ENCODE measurements at regions of chr4 and their contacts with region 1.

Region 1: DNA sequence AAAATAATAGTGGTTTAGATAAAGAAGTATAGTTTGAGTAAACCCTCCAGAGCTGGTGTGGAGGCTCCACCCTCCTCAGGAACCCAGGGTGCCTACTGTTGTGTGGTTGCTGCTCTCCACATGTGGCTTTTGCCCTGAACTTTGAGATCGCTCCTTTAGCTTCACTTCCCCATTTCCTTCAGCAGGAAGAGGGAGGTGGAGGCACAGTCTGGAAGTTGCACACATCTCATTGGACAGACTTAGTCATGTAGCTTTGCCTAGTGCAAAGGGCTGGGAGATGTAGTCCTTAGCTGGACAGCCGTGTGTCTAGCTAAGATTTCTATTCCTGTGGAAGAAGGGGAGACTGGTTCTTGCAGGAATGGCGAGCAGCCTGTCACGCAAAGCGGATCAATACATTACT is 37.9 kb downstream of the RGS12 start:
- DNase-seq: no peak
- ATAC-seq: no peak

Region 2: DNA sequence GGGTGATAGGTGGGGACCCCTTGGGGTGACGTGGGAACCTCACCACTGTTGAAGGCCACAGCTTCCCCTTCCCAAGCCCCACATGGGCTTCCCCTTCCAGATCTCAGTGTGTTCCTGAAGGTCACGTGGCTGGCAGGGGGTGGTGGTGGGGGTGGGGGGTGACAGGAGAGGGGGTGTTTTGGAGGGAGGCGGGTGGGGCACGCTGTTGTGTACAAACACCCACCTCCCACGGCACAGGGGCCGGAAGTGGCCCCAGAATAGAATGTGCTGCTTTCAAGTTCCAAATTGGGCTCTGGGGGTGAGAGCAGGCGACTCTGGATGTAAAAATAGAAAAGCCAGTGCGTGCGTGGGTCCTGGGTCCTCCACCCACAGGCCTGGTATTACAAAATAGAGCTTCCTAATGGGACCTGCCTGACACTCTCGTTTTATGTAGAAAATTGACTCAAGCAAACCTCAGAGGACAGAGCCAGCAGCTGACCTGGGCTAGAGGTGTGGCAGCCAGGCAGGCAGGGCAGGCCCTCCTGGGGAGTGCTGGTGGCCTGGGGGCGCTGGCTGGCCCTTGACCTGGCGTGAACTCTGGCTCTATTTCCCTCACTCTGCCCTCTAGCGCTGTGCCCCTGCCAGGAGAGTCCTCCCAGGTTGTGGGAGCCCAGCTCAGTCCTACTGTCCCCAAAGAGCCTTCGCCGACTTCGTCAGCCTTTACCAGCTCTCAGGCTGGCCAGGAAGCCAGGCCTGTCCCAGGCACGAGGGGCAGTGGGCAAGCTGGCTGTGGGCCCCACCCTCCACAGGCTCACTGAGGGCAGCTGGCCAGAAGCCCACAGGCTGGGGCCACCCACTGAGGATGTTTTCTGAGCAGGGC is 543.2 kb before region 1 on chr4:
- intact Hi-C with region 1: no loop called
- DNase-seq: peak; percentile 80
- ATAC-seq: peak; percentile 51

Region 3: GRCh38 chr4:3201718-3202702 is 128.7 kb before region 1 on chr4:
- intact Hi-C with region 1: no loop called
- DNase-seq: no peak
- ATAC-seq: no peak

Region 4: GRCh38 chr4:3292571-3293400 is 37.9 kb before region 1 on chr4 and contains the start of gene RGS12:
- intact Hi-C with region 1: loop called (anchors 5 kb)
- DNase-seq: peak; percentile 96
- ATAC-seq: peak; percentile 97
- total RNA-seq, gene RGS12: 21.0 TPM

Region 5: GRCh38 chr4:3442959-3443749 is 112.4 kb after region 1 on chr4:
- intact Hi-C with region 1: no loop called
- DNase-seq: peak; percentile 71
- ATAC-seq: peak; percentile 54